SK-N-SH (cell line): ENCODE measurements at regions of chr4 and their contacts with region 1.

Region 1: DNA sequence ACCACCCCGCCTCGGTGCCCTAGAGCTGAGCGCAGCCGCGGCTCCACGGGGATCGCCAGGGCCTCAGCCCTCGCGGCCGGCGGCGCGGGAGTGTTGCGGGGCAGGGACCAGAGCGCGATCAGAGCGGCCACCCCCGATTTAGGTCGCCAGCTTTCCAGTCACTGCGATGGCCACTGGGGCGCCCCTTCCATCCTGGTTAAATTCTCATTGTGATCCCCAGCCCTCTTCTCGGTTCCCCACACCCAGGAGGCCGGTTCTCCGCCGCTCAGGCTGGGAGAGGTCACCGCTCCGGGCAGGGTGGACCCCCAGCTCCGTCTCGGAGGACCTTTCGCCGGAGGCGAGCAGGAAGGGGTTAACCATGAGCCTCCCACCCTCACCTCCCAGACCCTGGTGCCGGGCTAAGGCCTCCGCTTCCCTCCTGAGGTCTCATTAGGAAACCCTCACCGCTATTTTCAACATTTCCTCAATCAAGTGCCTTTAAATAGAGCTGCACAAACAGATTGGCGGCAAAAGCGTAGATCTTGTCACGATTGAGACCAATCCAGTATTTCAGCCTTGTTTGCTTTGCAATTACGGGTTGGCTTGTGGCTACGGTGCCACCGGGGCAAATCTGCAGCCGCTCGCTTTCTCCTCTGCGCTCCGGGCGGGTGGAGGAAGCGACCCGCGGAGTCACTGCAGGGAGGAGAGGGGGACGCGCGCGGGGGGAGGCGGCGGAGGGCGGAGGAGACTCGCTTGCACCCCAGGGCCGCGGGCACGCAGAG is 8.3 kb upstream of the HAND2 start:
- DNase-seq: peak; percentile 68
- H3K4me3 ChIP-seq: peak overlapping the region; percentile 61 to 62
- H3K27ac ChIP-seq: peak overlapping the region; percentile 91 to 99
- H3K4me1 ChIP-seq: peaks cover 12 to 34% of the 10 kb centered on the region in 2 experiments; a peak in 3 of 4 replicates
- H3K27me3 ChIP-seq: no peaks in the 10 kb centered on the region
- CTCF ChIP-seq: no peak
- EP300 ChIP-seq: no peak
- RAD21 ChIP-seq: no peak

Region 2: DNA sequence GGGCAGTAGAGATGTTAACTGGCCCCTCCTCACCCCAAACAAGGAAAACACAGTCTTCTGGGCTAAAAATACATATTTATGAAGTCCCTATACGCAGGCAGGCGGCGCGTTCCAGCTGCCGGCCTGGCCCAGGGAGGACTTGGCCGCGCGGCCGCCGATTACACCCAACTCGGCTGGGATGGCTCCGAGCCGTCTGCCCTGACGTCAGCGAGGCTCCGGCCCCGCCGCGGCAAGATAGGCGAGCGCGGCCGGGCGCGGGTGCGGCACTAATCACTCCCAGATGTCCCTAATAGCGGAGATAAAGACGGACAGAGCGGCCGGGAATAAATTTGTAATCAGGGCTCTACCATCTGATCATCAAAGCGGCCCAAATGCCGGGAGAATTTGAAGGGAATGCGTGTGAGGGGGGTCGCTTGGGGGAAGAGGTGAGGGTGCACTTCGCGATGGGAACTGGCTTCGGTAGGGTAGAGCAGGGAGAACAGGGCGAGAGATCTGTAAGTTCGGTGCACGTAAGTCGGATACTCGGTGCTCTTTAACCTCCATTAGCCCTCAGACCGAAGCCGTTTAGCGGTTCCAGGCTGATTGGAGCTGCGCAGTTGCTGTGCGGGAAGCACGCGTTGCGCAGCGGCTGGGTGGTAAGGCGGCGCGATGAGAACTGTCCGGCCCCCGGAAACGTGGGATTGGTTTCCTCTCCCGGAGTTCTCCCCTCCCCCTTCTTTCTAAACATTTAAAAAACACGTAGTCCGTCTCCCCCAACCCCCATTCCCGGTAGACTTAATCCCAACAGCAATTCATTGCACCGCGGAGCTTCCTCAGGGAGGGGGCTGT is 16.0 kb before region 1 on chr4:
- CTCF ChIA-PET with region 1: interaction called, 8 read pairs
- POLR2A ChIA-PET with region 1: interaction called, 142 read pairs
- DNase-seq: peak; percentile 73
- H3K4me3 ChIP-seq: peak overlapping the region; percentile 61 to 92
- H3K27ac ChIP-seq: peak overlapping the region; percentile 99
- H3K4me1 ChIP-seq: peaks cover 23 to 30% of the 10 kb centered on the region in 2 experiments
- H3K27me3 ChIP-seq: no peaks in the 10 kb centered on the region
- CTCF ChIP-seq: peak; percentile 22
- EP300 ChIP-seq: peak in 1 of 2 experiments; percentile 82; a peak in 2 of 4 replicates
- RAD21 ChIP-seq: no peak

Region 3: DNA sequence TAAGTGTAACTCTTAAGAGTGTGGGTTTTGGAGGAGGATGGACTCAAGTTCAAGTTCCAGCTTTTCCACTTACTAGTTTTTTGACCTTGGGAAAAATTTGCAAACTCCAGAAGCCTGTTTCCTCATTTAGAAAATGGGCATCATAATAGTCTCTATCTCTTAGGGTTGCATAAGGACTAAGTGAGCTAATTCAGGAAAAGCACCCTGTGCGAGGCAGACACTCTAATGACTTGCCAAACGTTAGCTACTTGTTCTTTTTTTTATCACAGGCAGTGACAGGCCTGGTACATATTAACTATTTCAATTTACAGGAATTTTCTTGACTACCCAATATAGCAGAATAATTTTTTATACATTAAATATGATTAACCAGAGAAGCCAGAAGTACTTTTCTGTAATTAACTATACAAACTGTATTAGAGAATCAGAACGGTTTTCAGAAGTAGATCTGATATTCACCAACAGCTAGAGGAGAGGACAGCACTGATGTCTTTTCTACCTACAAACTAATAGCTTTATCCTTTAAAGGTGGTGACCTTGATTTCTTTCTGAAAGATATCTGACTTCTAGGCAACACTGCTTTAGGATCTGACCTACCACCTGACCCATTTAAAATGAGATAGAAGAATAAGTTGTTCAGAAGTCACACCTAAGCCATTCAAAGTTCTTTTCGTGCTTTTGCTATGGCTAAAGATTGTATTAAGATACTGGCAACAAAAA is 131.3 kb after region 1 on chr4:
- CTCF ChIA-PET with region 1: no interaction called
- POLR2A ChIA-PET with region 1: no interaction called
- DNase-seq: no peak
- H3K4me3 ChIP-seq: no peak overlapping the region
- H3K27ac ChIP-seq: no peak overlapping the region
- H3K4me1 ChIP-seq: no peaks in the 10 kb centered on the region; a peak in 1 of 4 replicates
- H3K27me3 ChIP-seq: no peaks in the 10 kb centered on the region
- CTCF ChIP-seq: no peak
- EP300 ChIP-seq: no peak
- RAD21 ChIP-seq: no peak

Region 4: DNA sequence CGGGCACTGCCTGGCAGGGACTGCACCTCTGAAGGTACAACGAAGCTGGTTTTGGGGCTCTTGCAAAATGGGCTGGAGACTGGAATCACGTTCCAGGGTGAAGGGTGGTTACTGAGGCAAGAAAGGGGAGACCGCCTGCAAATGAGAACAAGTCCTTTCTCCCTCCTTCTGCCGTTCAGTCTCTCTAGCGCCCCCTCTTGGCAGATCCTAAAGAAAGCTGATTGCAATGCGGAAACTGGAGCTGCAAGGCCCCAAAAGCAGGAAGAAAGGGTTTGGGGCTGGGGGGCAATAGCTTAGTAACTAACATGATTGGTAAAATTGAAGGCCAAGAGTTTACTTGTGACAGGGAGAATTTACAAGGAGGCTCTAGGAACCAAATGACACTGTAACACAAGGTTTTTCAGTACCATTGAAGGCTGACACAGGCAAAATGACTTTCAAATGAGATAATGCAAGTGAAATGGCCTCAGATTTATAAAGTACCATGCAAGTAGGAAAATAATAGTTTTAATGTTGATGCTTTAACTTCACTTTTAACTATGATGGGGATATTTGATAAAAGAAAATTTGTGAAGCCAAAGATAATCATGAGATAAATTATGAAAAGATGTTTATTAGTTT is 214.4 kb after region 1 on chr4:
- CTCF ChIA-PET with region 1: interaction called, 27 read pairs
- POLR2A ChIA-PET with region 1: interaction called, 19 read pairs
- DNase-seq: no peak
- H3K4me3 ChIP-seq: no peak overlapping the region
- H3K27ac ChIP-seq: peak overlapping the region in 1 of 2 experiments; percentile 94; a peak in 2 of 4 replicates
- H3K4me1 ChIP-seq: peaks cover 0 to 13% of the 10 kb centered on the region in 2 experiments; a peak in 2 of 4 replicates
- H3K27me3 ChIP-seq: no peaks in the 10 kb centered on the region
- CTCF ChIP-seq: peak; percentile 59
- EP300 ChIP-seq: no peak
- RAD21 ChIP-seq: peak; percentile 32

Region 5: GRCh38 chr4:173766171-173766600 is 227.9 kb after region 1 on chr4:
- CTCF ChIA-PET with region 1: interaction called, 4 read pairs
- POLR2A ChIA-PET with region 1: interaction called, 22 read pairs
- DNase-seq: peak; percentile 67
- H3K4me3 ChIP-seq: no peak overlapping the region
- H3K27ac ChIP-seq: peak overlapping the region in 1 of 2 experiments; percentile 100; a peak in 2 of 4 replicates
- H3K4me1 ChIP-seq: peaks cover 0 to 45% of the 10 kb centered on the region in 2 experiments; a peak in 2 of 4 replicates
- H3K27me3 ChIP-seq: no peaks in the 10 kb centered on the region
- CTCF ChIP-seq: no peak
- EP300 ChIP-seq: peak; percentile 29 to 100; a peak in 2 of 4 replicates
- RAD21 ChIP-seq: peak; percentile 53

Region 6: DNA sequence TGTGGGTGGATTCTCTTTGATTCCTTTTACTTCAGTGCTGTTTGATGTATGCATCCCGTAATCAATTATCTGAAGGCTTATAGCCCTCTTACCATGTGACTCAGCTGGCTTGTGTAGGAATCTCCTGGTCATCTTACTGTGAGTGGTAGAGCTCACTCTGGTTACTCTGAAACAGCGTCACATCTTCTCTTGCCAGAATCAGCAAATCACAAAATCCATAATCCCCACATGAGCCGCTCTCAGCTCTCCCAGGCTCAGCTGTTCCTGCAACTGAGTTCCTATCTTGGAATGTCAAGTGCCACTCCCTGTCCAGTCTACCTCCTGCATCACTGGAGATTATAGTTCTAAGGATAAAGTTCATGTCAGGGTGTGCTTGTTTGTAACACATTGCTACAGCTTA is 467.1 kb after region 1 on chr4:
- CTCF ChIA-PET with region 1: interaction called, 11 read pairs
- POLR2A ChIA-PET with region 1: interaction called, 27 read pairs
- DNase-seq: no peak
- H3K4me3 ChIP-seq: no peak overlapping the region
- H3K27ac ChIP-seq: peak overlapping the region in 1 of 2 experiments; percentile 100; a peak in 2 of 4 replicates
- H3K4me1 ChIP-seq: peaks cover 5 to 27% of the 10 kb centered on the region in 2 experiments; a peak in 3 of 4 replicates
- H3K27me3 ChIP-seq: no peaks in the 10 kb centered on the region
- CTCF ChIP-seq: no peak
- EP300 ChIP-seq: peak in 1 of 2 experiments; percentile 22; a peak in 1 of 4 replicates
- RAD21 ChIP-seq: no peak